ENCODE measurements at regions of chr17 and their contacts with region 1.

Region 1: GRCh38 chr17:48593840-48594537 is 410 bp upstream of the HOXB5 start:
- DNase-seq: peak; percentile 69 to 88 (median 80)
- ATAC-seq: peak; percentile 76
- H3K4me3 ChIP-seq: peak overlapping the region in 1 of 2 experiments; percentile 46
- H3K4me3 Mint-ChIP-seq: peak overlapping the region; percentile 81
- H3K27ac ChIP-seq: no peak overlapping the region
- H3K27ac Mint-ChIP-seq: no peak overlapping the region
- H3K4me1 ChIP-seq: peaks cover 41% of the 10 kb centered on the region
- H3K4me1 Mint-ChIP-seq: peaks cover 46% of the 10 kb centered on the region
- H3K27me3 ChIP-seq: peaks cover 43 to 55% of the 10 kb centered on the region in 2 experiments
- H3K27me3 Mint-ChIP-seq: peaks cover 82% of the 10 kb centered on the region
- CTCF ChIP-seq: peak; percentile 85

Region 2: DNA sequence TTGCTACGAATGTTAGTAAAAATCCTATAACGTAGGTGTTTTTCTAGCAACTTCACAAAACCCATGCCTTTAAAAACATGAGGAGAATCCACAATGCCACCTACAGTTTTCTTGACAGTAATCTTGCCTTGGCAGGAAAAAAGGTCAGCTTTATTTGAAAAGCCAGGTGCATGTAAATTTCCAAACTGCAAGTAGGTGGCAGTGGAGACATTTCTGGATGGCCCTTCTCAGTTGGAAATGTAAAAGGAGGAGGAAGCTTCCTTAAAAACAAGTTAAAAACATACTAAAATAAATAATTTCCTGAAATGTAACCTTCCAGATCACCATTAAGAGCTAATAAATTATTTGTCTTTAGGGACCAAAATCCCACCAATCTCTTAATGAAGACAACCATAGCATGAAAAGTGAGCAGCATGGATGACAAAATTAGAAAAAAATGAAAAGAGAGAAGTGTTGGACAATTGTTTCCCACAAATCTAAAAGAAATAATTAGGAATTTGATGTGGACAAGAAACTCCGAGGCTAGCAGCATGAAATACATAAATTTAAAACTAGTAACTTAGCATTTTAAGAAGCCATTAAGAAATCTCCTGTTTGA is 334.2 kb before region 1 on chr17:
- CTCF ChIA-PET with region 1: interaction called, 23 read pairs
- POLR2A ChIA-PET with region 1: interaction called, 4 read pairs
- intact Hi-C with region 1: loop called (anchors 2 kb)
- DNase-seq: peak in 2 of 9 experiments; percentile 10 to 23
- ATAC-seq: no peak
- H3K4me3 ChIP-seq: no peak overlapping the region
- H3K4me3 Mint-ChIP-seq: no peak overlapping the region
- H3K27ac ChIP-seq: no peak overlapping the region
- H3K27ac Mint-ChIP-seq: no peak overlapping the region
- H3K4me1 ChIP-seq: no peaks in the 10 kb centered on the region
- H3K4me1 Mint-ChIP-seq: peaks cover 9% of the 10 kb centered on the region
- H3K27me3 ChIP-seq: no peaks in the 10 kb centered on the region
- H3K27me3 Mint-ChIP-seq: no peaks in the 10 kb centered on the region
- CTCF ChIP-seq: peak; percentile 42

Region 3: DNA sequence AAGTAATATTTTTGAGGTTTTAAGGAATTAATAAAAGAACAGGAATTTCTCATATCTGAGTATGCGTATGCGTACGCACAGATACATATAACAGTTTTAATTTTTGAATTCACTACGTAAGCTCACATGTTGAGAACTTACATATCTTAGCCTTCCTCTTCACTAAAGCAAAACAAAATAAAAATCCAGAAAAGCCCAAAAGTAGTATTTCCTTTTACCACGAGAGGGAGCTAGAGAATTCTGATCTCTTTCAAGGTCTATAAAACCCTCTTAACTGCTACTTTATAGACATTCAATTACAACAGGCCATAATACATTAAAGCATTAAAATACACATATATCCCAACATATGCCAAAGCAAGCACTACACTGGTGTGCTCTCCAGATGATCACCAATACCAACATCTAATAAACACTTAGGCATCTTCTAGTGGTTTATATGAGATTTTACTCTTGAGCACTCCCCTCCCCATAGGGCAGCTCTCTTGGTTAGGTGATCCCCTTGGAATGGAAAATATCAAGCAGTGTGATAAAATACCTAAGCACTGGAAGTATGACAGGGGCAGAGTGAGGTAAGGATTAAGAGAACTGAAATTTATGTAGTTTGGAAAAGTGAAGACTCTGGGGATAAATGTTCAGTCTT is 258.0 kb before region 1 on chr17:
- CTCF ChIA-PET with region 1: interaction called, 65 read pairs
- POLR2A ChIA-PET with region 1: interaction called, 7 read pairs
- intact Hi-C with region 1: loop called (anchors 1 kb)
- DNase-seq: peak in 2 of 9 experiments; percentile 68 to 76
- ATAC-seq: peak; percentile 67
- H3K4me3 ChIP-seq: no peak overlapping the region
- H3K4me3 Mint-ChIP-seq: no peak overlapping the region
- H3K27ac ChIP-seq: no peak overlapping the region
- H3K27ac Mint-ChIP-seq: no peak overlapping the region
- H3K4me1 ChIP-seq: no peaks in the 10 kb centered on the region
- H3K4me1 Mint-ChIP-seq: peaks cover 9% of the 10 kb centered on the region
- H3K27me3 ChIP-seq: no peaks in the 10 kb centered on the region
- H3K27me3 Mint-ChIP-seq: no peaks in the 10 kb centered on the region
- CTCF ChIP-seq: peak; percentile 65

Region 4: GRCh38 chr17:48351831-48352332 is 242.1 kb before region 1 on chr17:
- CTCF ChIA-PET with region 1: interaction called, 27 read pairs
- POLR2A ChIA-PET with region 1: no interaction called
- intact Hi-C with region 1: loop called in 1 of 2 experiments (anchors 2 kb)
- DNase-seq: peak in 2 of 9 experiments; percentile 54 to 70
- ATAC-seq: peak; percentile 76
- H3K4me3 ChIP-seq: no peak overlapping the region
- H3K4me3 Mint-ChIP-seq: no peak overlapping the region
- H3K27ac ChIP-seq: no peak overlapping the region
- H3K27ac Mint-ChIP-seq: no peak overlapping the region
- H3K4me1 ChIP-seq: peaks cover 5% of the 10 kb centered on the region
- H3K4me1 Mint-ChIP-seq: peaks cover 16% of the 10 kb centered on the region
- H3K27me3 ChIP-seq: no peaks in the 10 kb centered on the region
- H3K27me3 Mint-ChIP-seq: no peaks in the 10 kb centered on the region
- CTCF ChIP-seq: peak; percentile 87

Region 5: GRCh38 chr17:48500966-48501426 is 93.0 kb before region 1 on chr17:
- CTCF ChIA-PET with region 1: interaction called, 28 read pairs
- POLR2A ChIA-PET with region 1: interaction called, 3 read pairs
- intact Hi-C with region 1: no loop called
- DNase-seq: peak in 1 of 9 experiments; percentile 39
- ATAC-seq: no peak
- H3K4me3 ChIP-seq: no peak overlapping the region
- H3K4me3 Mint-ChIP-seq: no peak overlapping the region
- H3K27ac ChIP-seq: no peak overlapping the region
- H3K27ac Mint-ChIP-seq: no peak overlapping the region
- H3K4me1 ChIP-seq: no peaks in the 10 kb centered on the region
- H3K4me1 Mint-ChIP-seq: peaks cover 6% of the 10 kb centered on the region
- H3K27me3 ChIP-seq: no peaks in the 10 kb centered on the region
- H3K27me3 Mint-ChIP-seq: peaks cover 8% of the 10 kb centered on the region
- CTCF ChIP-seq: no peak

Region 6: GRCh38 chr17:48610282-48611211 is 16.6 kb after region 1 on chr17 and contains the start of gene HOXB7:
- CTCF ChIA-PET with region 1: interaction called, 13 read pairs
- POLR2A ChIA-PET with region 1: no interaction called
- intact Hi-C with region 1: no loop called
- DNase-seq: peak in 8 of 9 experiments; percentile 27 to 77 (median 66)
- ATAC-seq: peak; percentile 16
- H3K4me3 ChIP-seq: peak within 1 kb of the TSS; percentile 77 to 90
- H3K4me3 Mint-ChIP-seq: peak within 1 kb of the TSS; percentile 91
- H3K27ac ChIP-seq: no peak within 1 kb of the TSS
- H3K27ac Mint-ChIP-seq: no peak within 1 kb of the TSS
- H3K4me1 ChIP-seq: peaks cover 49% of the 10 kb centered on the region
- H3K4me1 Mint-ChIP-seq: peaks cover 39% of the 10 kb centered on the region
- H3K27me3 ChIP-seq: peaks cover 46 to 49% of the 10 kb centered on the region in 2 experiments
- H3K27me3 Mint-ChIP-seq: peaks cover 69% of the 10 kb centered on the region
- CTCF ChIP-seq: no peak
- total RNA-seq, gene HOXB7: 0.22 TPM in 1 of 2 experiments, not detected in the other

Region 7: DNA sequence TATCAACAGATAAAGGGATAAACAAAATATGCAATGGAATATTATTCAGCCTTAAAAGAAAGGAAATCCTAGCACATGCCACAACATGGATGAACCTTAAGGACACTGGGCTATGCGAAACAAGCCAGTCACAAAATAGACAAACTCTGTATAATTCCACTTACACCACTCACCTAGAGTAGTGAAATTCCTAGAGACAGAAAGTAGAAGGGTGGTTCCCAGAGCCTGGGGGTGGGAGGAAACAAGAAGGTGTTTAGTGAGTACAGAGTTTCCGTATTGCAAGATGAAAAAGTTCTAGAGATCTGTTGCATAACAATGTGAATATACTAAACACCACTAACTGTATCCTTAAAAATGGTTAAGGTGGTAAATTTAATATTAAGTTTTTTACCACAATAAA is 1073.9 kb after region 1 on chr17:
- CTCF ChIA-PET with region 1: no interaction called
- POLR2A ChIA-PET with region 1: no interaction called
- intact Hi-C with region 1: no loop called
- DNase-seq: peak in 1 of 9 experiments; percentile 40
- ATAC-seq: no peak
- H3K4me3 ChIP-seq: no peak overlapping the region
- H3K4me3 Mint-ChIP-seq: no peak overlapping the region
- H3K27ac ChIP-seq: no peak overlapping the region
- H3K27ac Mint-ChIP-seq: peak overlapping the region; percentile 49
- H3K4me1 ChIP-seq: peaks cover 37% of the 10 kb centered on the region
- H3K4me1 Mint-ChIP-seq: peaks cover 63% of the 10 kb centered on the region
- H3K27me3 ChIP-seq: no peaks in the 10 kb centered on the region
- H3K27me3 Mint-ChIP-seq: no peaks in the 10 kb centered on the region
- CTCF ChIP-seq: no peak

Measured in CD8-positive, alpha-beta T cell (primary cell).